K562 (cell line): ENCODE measurements at regions of chr6 and their contacts with region 1.

Region 1: GRCh38 chr6:152948150-152948768 is 34.6 kb downstream of the FBXO5 start:
- DNase-seq: peak in 2 of 4 experiments; percentile 42 to 75
- ATAC-seq: peak; percentile 94
- H3K4me3 ChIP-seq: no peak overlapping the region
- H3K27ac ChIP-seq: no peak overlapping the region
- H3K4me1 ChIP-seq: no peaks in the 10 kb centered on the region
- H3K27me3 ChIP-seq: peaks cover 0 to 2% of the 10 kb centered on the region in 2 experiments; a peak in 1 of 5 replicates
- CTCF ChIP-seq: peak; percentile 65 to 87 (median 74); a peak in 5 of 6 replicates
- EP300 ChIP-seq: no peak
- POLR2A ChIP-seq: no peak
- RAD21 ChIP-seq: peak; percentile 91 to 96

Region 2: DNA sequence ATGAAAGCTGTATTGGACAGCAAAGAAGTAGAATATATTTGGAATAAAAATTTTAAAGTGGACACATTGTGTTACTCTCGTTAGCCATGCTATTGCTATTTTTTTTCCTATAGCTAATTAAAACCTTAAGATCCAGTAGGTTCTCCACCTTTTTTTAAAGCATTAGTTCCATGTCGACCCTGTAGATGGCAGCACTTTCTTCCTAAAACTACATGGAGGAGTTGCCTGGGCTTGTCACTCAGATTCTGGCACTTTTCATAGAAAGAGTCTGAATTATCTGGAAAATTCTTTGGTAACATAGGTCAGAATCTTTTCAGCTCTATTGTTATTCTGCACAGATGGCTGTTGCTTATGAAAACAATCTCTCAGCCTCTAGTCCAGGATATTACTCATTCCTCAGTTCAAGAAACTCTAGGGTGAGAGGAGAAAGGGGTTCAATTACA is 1182.8 kb before region 1 on chr6:
- CTCF ChIA-PET with region 1: no interaction called
- POLR2A ChIA-PET with region 1: no interaction called
- in situ Hi-C with region 1: no loop called
- intact Hi-C with region 1: loop called (anchors 5 kb)
- DNase-seq: peak; percentile 61 to 69 (median 64)
- ATAC-seq: peak; percentile 91
- H3K4me3 ChIP-seq: no peak overlapping the region
- H3K27ac ChIP-seq: no peak overlapping the region
- H3K4me1 ChIP-seq: no peaks in the 10 kb centered on the region
- H3K27me3 ChIP-seq: no peaks in the 10 kb centered on the region
- CTCF ChIP-seq: peak; percentile 59 to 76 (median 74)
- EP300 ChIP-seq: no peak
- POLR2A ChIP-seq: no peak
- RAD21 ChIP-seq: peak; percentile 42 to 64

Region 3: GRCh38 chr6:152267967-152268845 is 680.1 kb before region 1 on chr6:
- CTCF ChIA-PET with region 1: no interaction called
- POLR2A ChIA-PET with region 1: no interaction called
- in situ Hi-C with region 1: no loop called
- intact Hi-C with region 1: loop called (anchors 10 kb)
- DNase-seq: peak; percentile 11 to 36 (median 24)
- ATAC-seq: no peak
- H3K4me3 ChIP-seq: no peak overlapping the region
- H3K27ac ChIP-seq: no peak overlapping the region
- H3K4me1 ChIP-seq: no peaks in the 10 kb centered on the region
- H3K27me3 ChIP-seq: no peaks in the 10 kb centered on the region
- CTCF ChIP-seq: peak; percentile 45 to 73 (median 50); a peak in 4 of 6 replicates
- EP300 ChIP-seq: no peak
- POLR2A ChIP-seq: no peak
- RAD21 ChIP-seq: peak; percentile 51 to 65

Region 4: DNA sequence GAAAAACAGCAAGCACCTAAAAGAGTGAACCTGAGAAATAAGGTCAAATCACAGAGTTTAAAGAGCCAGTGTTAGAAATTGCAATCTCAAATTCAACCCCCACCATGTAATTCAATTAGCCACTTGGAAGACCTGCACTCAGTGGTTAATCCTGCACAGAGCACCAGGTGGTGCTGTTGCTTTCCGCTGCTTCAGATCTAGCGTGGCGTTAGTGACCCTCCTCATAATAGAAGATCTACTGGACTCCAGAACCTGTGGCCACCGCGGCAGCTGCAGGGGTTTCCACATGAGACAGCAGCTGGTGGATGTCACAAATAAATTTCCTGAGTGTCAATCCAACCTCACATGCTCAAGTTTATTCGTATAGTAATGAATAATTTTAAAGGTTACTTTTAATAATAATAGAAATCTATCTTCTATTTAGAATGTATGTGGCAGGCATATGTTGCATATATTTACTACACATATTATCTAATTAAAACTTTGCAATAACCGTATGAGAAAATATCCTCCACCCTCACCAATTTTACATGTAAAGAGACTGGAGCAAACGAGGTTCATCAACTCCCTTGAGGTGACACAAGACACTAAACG is 395.5 kb before region 1 on chr6:
- CTCF ChIA-PET with region 1: interaction called, 3 read pairs
- POLR2A ChIA-PET with region 1: no interaction called
- in situ Hi-C with region 1: no loop called
- intact Hi-C with region 1: loop called (anchors 1 kb)
- DNase-seq: peak; percentile 24 to 50 (median 44)
- ATAC-seq: peak; percentile 78
- H3K4me3 ChIP-seq: no peak overlapping the region
- H3K27ac ChIP-seq: no peak overlapping the region
- H3K4me1 ChIP-seq: no peaks in the 10 kb centered on the region
- H3K27me3 ChIP-seq: no peaks in the 10 kb centered on the region
- CTCF ChIP-seq: peak; percentile 43 to 58 (median 47)
- EP300 ChIP-seq: no peak
- POLR2A ChIP-seq: no peak
- RAD21 ChIP-seq: peak; percentile 40 to 60; a peak in 3 of 4 replicates

Region 5: DNA sequence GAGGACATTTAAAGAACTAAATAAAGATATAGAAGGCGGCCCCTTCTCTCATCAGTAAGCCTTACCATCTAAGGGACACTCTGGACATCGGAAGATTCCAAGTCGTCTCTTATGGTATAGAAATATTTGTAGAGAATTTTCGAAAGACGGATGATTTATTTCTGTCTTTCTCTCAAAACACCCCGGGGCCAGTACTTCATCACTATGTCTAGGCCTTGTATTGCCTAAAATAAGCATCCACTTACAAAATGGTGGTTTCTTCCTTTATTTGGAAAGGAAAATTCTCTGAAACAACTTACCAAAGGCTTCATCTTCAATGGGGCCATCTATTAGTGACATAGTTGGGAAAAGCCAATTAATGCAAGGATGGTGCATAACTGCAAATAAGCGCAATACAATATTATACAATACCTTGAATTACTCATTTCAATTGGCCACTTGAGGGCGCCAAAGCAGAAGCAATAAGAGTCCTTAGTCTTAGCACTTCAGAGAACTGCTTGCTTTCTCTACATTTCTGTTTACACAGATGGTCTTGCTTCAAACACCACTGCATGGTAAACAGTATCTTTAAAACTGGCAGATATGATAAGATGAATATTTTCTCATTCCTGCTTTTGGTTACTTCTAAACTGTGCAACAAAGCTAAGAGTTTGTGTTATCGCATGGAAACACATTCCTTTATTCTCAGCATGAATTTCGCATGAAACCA is 84.5 kb before region 1 on chr6:
- CTCF ChIA-PET with region 1: interaction called, 27 read pairs
- POLR2A ChIA-PET with region 1: no interaction called
- in situ Hi-C with region 1: no loop called
- intact Hi-C with region 1: loop called (anchors 1 kb)
- DNase-seq: peak; percentile 48 to 88 (median 56)
- ATAC-seq: peak; percentile 97
- H3K4me3 ChIP-seq: no peak overlapping the region
- H3K27ac ChIP-seq: no peak overlapping the region
- H3K4me1 ChIP-seq: peaks cover 0 to 3% of the 10 kb centered on the region in 2 experiments; a peak in 1 of 5 replicates
- H3K27me3 ChIP-seq: no peaks in the 10 kb centered on the region
- CTCF ChIP-seq: peak; percentile 64 to 91 (median 73)
- EP300 ChIP-seq: no peak
- POLR2A ChIP-seq: no peak
- RAD21 ChIP-seq: peak; percentile 83 to 91